Psoas muscle (tissue), 8 donors: ENCODE measurements at regions of chr14 and their contacts with region 1.

Region 1: DNA sequence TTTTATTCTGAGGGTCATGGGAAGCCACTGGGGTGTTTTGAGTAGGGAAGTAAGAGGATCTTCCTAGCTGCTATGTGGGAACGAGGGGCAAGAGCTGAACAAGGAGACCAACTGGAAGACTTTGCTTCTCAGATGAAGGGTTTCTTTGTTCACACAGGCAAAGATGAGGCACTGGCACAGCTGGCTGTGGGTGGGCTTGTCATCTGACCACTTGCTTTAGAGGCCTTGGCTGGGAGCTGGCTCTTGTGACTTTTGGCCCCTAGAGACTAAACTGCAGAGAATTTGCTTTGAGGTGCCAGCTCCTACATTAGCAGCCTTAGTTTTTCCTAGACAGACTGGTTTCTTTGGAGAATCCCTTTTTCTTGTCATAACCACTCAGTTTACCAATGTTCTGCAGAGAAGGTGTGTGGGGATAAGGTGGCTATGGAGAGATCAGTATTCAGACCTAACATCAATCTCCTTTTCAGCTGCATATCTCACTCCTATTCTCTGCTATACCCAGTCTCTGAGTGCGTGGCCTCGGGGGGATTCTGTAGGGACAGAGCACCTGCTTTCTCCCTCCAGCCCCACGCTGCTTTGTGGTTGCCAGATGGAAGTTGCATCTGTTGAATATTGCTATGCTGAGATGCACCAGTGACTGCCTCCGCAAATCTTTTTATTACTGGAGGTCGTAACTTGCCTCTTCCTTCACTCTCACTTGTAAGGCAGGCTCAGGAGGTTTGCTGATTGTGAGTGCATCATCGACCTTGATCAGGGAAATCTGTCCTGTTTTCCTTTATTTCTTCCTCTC is 12.7 kb downstream of the PPP2R5C start:
- DNase-seq: no peak
- ATAC-seq: no peak
- H3K4me3 ChIP-seq: no peak overlapping the region
- H3K27ac ChIP-seq: no peak overlapping the region
- H3K4me1 ChIP-seq: peaks cover 19% of the 10 kb centered on the region
- H3K27me3 ChIP-seq: no peaks in the 10 kb centered on the region
- CTCF ChIP-seq: no peak

Region 2: DNA sequence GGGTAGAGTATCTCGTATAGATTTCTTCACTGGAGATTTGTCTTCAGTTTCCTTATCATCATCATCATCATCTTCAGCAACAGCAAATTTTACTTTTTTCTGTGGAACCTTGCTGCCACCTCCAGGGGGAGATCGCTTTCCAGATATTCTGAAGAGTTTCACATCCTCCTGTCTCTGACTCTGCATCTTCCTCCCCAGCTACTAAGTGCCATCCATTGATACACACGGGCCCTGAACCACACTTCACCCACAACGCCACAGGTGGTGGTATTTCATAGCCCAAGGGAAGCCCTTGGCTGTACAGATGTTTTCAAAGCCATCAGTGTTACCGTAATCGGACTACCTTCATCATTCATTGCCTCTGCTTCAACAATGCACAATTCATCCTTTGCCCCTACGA is 69.5 kb after region 1 on chr14:
- intact Hi-C with region 1: loop called in 1 of 2 experiments (anchors 5 kb)
- DNase-seq: no peak
- ATAC-seq: peak in 2 of 4 donors; percentile 32 to 54
- H3K4me3 ChIP-seq: no peak overlapping the region
- H3K27ac ChIP-seq: no peak overlapping the region
- H3K4me1 ChIP-seq: peaks cover 26% of the 10 kb centered on the region
- H3K27me3 ChIP-seq: no peaks in the 10 kb centered on the region
- CTCF ChIP-seq: peak; percentile 43

Region 3: DNA sequence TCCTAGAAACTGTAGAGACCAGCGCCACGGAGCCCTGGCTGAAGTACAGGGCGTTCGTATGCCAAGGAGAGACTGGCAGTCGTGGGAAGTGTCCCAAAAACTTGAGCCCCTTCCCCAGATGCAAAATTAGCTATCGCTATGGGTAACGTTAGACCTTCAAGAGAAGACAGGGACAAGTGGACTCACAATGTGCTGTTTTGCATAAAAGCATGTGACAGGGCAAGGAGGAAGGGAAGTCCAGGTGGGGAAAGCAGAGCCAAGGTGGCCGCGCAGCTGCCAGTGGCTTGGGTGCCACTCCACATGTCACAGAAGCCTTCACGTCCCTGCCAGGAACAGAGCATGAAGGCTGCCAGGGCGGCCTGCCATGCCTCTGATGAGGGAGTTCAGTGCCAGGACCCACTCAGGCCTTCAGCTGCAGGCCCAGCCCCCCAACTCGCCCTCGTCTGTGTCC is 128.9 kb after region 1 on chr14:
- intact Hi-C with region 1: loop called in 1 of 2 experiments (anchors 5 kb)
- DNase-seq: peak; percentile 53 to 88
- ATAC-seq: peak; percentile 93 to 99 (median 98)
- H3K4me3 ChIP-seq: peak overlapping the region; percentile 29
- H3K27ac ChIP-seq: peak overlapping the region; percentile 58
- H3K4me1 ChIP-seq: peaks cover 10% of the 10 kb centered on the region
- H3K27me3 ChIP-seq: no peaks in the 10 kb centered on the region
- CTCF ChIP-seq: no peak

Region 4: GRCh38 chr14:101947906-101948665 is 173.9 kb after region 1 on chr14:
- intact Hi-C with region 1: loop called (anchors 5 kb)
- DNase-seq: peak; percentile 100
- ATAC-seq: peak; percentile 97 to 99 (median 99)
- H3K4me3 ChIP-seq: peak overlapping the region; percentile 97
- H3K27ac ChIP-seq: peak overlapping the region; percentile 99
- H3K4me1 ChIP-seq: peaks cover 13% of the 10 kb centered on the region
- H3K27me3 ChIP-seq: no peaks in the 10 kb centered on the region
- CTCF ChIP-seq: no peak

Region 5: DNA sequence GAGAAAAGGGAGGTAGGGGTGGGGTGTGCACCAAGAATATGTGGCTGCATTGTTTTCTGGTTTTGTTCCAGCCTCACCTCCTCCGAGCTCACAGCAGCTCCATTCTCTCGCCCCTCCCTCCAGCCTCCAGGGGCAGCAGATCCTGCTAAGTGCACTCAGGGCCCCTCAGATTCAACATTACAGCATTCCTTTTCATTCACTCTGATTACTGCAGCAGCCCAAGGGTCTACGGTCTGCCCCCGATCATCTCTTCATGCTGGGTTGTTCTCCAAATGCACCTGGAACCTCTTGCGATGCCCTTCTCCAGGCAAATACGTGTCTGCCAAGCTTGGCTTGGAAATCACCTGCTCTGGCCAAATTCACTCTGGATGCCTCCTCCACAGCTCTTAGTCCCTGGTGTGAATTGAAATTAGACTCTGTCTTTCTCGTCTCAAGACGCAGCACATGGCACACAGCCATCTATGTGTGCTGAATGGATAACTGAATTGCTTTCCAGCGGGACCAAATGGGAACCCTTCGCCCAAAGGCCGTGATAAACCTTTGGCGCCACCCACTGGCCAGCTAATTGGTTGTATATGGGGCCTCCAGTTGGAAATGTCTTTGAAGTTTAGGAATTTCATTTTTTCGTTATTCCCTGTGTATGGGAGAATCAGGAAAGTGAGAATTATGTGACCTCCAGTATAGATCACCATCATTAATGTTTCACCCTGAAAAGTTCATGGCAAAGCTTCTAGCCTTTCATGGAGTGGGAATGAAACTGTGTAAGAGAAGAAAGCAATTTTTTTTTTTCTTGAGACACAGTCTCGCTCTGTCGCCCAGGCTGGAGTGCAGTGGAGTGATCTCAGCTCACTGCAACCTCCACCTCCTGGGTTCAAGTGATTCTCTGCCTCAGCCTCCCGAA is 322.3 kb after region 1 on chr14:
- intact Hi-C with region 1: loop called in 1 of 2 experiments (anchors 10 kb)
- DNase-seq: peak; percentile 88 to 93
- ATAC-seq: peak; percentile 85 to 98 (median 88)
- H3K4me3 ChIP-seq: no peak overlapping the region
- H3K27ac ChIP-seq: no peak overlapping the region
- H3K4me1 ChIP-seq: peaks cover 10% of the 10 kb centered on the region
- H3K27me3 ChIP-seq: no peaks in the 10 kb centered on the region
- CTCF ChIP-seq: peak; percentile 84